Sciatic nerve (tissue), 2 donors: ENCODE measurements at regions of chr11 and their contacts with region 1.

Region 1: GRCh38 chr11:75388386-75389275 is 10.7 kb upstream of the RPS3 start:
- DNase-seq: peak; percentile 86
- ATAC-seq: peak; percentile 82

Region 2: DNA sequence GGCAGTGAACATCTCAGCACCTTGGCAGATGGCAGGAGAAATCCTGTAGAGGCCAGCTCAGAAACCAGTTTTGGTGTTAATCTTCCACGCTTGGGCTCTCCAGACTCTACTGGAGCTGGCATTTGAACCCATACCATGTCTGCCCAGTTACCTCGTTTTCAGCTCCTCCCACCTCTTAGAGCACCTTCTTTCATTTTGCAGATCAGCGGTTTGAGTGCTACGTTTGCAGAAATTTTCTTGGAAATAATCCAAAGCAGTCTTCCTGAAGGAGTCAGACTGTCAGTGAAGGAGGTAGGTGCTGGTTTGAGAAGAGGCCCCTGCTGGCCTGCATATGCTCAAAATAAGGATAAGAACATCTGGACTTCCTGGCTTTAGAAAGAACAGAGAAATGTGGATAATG is 1525.7 kb before region 1 on chr11:
- intact Hi-C with region 1: loop called (anchors 5 kb)
- DNase-seq: no peak
- ATAC-seq: no peak

Region 3: DNA sequence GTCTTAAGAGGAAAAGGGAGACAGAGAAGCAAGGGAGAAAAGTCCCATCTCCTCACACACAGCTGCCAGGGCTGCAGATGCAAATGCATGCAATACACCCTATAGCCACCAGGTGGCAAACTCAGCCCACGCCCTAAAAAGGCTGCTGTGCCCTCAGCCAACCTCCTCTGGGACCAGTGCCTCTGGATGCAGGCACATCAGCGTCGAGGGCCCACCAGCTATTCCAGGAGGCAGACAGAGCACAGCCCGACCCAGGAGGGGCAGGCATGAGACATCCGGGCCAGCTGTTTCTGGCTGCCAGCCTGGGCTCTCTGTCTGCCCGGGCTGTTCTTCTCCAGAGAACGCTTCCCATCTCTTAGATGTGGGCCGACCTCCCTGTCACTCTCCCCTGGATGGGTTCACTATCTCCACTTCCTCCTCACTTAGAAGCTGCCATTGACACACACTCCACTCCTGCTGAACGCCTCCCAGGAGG is 108.4 kb before region 1 on chr11:
- intact Hi-C with region 1: no loop called
- DNase-seq: peak; percentile 85
- ATAC-seq: peak; percentile 83

Region 4: GRCh38 chr11:75328426-75329277 is 60.0 kb before region 1 on chr11:
- intact Hi-C with region 1: loop called (anchors 10 kb)
- DNase-seq: peak; percentile 83
- ATAC-seq: peak; percentile 89

Region 5: DNA sequence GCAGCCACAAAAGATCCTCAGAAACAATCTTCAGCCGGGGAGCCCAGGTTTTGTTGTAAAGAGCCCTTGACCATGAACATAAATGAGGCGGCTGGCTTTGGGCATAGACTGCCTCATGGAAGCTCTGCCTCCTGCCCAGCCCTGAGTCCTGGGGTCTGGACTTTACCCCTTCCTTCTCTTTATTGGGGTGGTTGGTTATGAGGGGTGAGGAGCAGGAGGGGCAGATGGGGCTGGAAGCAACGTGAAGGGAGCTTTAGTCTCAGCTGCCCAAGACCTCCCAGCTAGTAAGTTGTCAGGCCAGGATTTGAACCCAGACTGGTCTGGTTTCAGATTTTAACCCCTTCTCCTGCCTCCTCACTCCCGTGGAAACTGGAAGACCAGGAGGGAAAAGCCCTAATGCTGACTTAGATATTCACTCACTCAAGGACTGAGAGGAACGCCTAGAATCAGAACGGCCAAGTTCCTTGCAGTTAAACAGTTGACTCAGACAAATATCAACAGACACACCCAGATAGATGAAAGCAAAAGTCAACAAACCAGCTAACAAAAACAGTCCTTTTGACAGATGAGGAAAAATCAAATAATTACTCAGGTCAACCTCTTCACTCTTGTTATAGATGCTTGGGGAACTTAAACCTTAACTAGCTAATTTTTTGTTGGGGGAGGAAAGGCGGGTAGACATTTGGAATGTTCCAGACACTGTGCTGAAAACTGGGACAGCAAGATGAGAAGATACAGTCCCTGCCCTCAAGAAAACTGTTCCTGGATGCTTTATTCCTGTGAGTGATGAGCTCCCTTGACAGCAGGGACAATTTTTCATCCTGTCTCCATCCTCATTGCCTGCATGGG is 16.5 kb before region 1 on chr11:
- intact Hi-C with region 1: no loop called
- DNase-seq: no peak
- ATAC-seq: peak; percentile 62

Region 6: DNA sequence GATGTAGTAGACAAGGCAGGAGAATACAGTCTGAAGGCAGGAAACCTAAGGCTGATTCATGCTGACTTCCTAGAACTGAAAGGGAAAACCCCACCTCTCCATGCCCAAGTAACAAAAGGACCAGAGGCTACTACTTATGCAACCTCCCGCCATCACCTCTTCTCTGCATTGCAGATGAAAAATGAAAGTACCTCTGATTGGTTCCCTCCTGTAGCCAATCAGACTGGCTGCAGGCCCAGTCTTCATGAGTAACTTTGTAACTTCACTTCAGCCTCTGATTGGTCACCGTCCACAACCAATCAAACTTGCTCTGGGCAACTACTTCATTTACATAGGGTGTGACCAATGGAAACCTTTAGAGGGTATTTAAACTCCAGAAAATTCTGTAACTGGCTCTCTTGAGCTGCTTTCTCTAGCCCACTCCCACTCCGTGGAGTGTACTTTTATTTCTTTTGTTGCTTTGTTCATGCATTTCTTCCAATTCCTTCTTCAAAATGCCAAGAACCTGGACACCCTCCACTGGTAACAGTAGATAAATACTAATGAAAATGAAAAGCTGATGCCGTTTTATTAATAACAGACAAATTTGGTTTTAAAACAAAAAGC is 285.4 kb after region 1 on chr11:
- intact Hi-C with region 1: no loop called
- DNase-seq: no peak
- ATAC-seq: no peak